Activated naive CD4-positive, alpha-beta T cell treated with anti-CD3 and anti-CD28 coated beads for 36 hours (primary cell): ENCODE measurements at regions of chr1 and their contacts with region 1.

Region 1: GRCh38 chr1:58941471-58942289 is 157.8 kb upstream of the JUN start:
- DNase-seq: peak; percentile 48
- H3K4me3 Mint-ChIP-seq: no peak overlapping the region
- H3K27ac Mint-ChIP-seq: peak overlapping the region; percentile 51
- H3K4me1 Mint-ChIP-seq: peaks cover 58% of the 10 kb centered on the region
- H3K27me3 Mint-ChIP-seq: no peaks in the 10 kb centered on the region

Region 2: DNA sequence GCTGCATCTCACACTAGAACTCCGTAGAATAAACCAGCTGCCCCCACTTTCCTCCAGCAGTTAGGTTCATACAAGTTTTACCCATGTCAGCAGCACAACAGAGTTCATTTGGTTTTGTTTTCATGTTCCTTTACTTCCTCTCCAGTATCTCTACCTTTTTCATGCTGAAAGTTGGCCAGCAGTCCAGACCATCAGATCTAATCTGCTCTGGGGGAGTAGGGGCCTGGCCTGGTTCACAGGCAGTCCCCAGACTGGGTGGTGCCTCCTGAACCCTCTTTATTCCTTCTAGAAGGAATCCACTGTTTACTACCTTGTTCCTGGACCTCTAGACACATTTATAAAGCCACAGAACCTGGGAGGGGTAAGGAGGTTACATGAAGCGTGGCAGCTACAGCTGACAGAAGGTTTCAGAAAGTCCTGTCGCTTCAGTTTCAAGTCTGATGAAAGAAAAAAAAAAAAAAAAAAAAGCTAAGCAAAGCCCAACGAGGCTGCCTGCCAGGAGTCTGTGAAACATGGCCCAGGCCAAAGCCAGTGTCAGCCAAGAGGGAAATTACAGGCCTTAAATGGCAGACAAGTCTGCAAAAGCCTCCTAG is 26.8 kb after region 1 on chr1:
- CTCF ChIA-PET with region 1: interaction called, 3 read pairs
- intact Hi-C with region 1: loop called (anchors 1 kb)
- DNase-seq: peak; percentile 43
- H3K4me3 Mint-ChIP-seq: no peak overlapping the region
- H3K27ac Mint-ChIP-seq: peak overlapping the region; percentile 86
- H3K4me1 Mint-ChIP-seq: peaks cover 27% of the 10 kb centered on the region
- H3K27me3 Mint-ChIP-seq: no peaks in the 10 kb centered on the region

Region 3: GRCh38 chr1:59007820-59008598 is 66.3 kb after region 1 on chr1:
- CTCF ChIA-PET with region 1: no interaction called
- intact Hi-C with region 1: loop called (anchors 5 kb)
- DNase-seq: peak; percentile 64
- H3K4me3 Mint-ChIP-seq: no peak overlapping the region
- H3K27ac Mint-ChIP-seq: peak overlapping the region; percentile 39
- H3K4me1 Mint-ChIP-seq: peaks cover 40% of the 10 kb centered on the region
- H3K27me3 Mint-ChIP-seq: no peaks in the 10 kb centered on the region

Region 4: GRCh38 chr1:59261537-59261936 is 319.9 kb after region 1 on chr1:
- CTCF ChIA-PET with region 1: no interaction called
- intact Hi-C with region 1: no loop called
- DNase-seq: no peak
- H3K4me3 Mint-ChIP-seq: no peak overlapping the region
- H3K27ac Mint-ChIP-seq: no peak overlapping the region
- H3K4me1 Mint-ChIP-seq: no peaks in the 10 kb centered on the region
- H3K27me3 Mint-ChIP-seq: no peaks in the 10 kb centered on the region